Dorsolateral prefrontal cortex (tissue), 120 donors: ENCODE measurements at regions of chr9 and their contacts with region 1.

Region 1: GRCh38 chr9:70258692-70259511 is at the start of gene SMC5:
- DNase-seq: peak; percentile 78 to 96 (median 87)
- H3K4me3 ChIP-seq: peak within 1 kb of the TSS; percentile 64 to 99 (median 92)
- H3K27ac ChIP-seq: peak within 1 kb of the TSS; percentile 63 to 97 (median 88)
- H3K27me3 ChIP-seq: no peaks in the 10 kb centered on the region
- CTCF ChIP-seq: peak in 21 of 56 donors; percentile 8 to 51 (median 28)
- total RNA-seq, gene SMC5: 12.0 to 37.3 (median 21.9) TPM

Region 2: DNA sequence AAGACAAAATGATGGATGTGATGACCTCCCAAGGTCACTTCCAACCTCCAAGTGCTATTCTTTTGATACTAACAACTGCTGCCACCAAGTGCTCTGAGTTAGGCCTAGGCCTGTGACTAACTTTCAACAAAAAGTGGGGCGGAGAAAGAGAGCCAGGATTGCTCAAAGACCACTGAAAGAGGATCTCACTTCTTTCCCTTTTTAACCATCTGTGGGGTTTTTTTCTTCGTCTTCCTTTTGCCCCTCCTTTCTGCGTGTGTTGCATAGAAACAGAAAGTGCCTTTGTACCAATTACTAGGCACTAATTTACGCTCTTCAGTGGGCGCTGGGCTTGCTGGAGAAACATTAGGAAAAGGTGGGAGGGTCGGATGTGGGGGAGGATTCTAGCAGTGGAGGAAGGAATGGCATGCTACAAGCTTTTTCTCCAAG is 147.5 kb after region 1 on chr9:
- intact Hi-C with region 1: loop called (anchors 5 to 10 kb)
- DNase-seq: no peak
- H3K4me3 ChIP-seq: peak overlapping the region in 41 of 59 donors; percentile 2 to 58 (median 28)
- H3K27ac ChIP-seq: peak overlapping the region in 58 of 59 donors; percentile 5 to 89 (median 70)
- H3K27me3 ChIP-seq: no peaks in the 10 kb centered on the region
- CTCF ChIP-seq: peak in 4 of 56 donors; percentile 6 to 16 (median 14)

Region 3: DNA sequence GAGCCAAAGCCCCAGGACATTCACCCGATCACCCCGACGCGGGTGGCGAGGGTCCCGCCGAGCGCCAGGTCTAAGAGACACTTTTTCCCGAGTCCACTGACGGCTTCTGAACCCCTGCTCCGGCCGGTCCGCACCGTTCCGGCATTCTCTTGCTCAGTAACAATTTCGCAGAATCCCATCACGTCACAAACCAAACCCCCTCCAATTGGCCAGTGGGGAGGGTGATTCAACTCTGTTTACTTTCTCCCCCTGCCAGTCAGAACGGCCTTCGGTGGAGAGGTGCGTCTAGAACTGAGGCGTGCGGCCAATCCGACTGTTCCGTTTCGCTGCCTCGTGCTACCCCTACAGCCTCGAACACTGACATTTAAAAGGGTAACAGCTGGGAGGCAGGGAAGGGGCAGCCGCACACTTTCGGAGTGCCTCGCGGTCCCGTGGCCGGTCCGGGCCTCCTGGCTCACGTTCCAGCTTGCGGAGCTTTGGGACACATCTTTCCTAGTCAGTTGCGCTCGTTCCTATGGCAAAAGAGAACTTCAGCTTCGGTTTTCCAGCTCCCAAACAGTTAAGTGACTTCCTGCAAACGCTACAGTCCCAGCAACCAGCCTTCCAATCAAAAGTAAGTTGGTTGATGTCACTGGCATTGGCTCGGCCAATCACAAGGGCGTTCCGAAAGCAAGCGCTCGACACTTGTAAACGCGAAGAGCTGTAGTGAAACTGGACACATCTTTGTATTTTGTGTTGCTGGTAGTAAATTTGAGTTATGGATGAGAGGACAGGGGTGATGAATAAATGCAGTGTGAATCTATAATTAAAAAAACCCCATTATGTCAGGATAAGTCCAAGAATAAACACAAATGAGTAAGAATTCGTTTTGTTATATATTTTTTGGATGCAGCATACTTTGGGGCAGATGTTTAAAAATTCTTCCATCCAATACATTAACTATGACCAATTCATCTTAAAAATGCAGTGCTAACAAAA is 155.2 kb after region 1 on chr9 and contains the start of gene KLF9:
- intact Hi-C with region 1: loop called (anchors 5 to 10 kb)
- DNase-seq: peak; percentile 82 to 97 (median 94)
- H3K4me3 ChIP-seq: peak within 1 kb of the TSS; percentile 63 to 99 (median 93)
- H3K27ac ChIP-seq: peak within 1 kb of the TSS; percentile 72 to 100 (median 99)
- H3K27me3 ChIP-seq: no peaks in the 10 kb centered on the region
- CTCF ChIP-seq: peak in 8 of 56 donors; percentile 4 to 16 (median 10)
- total RNA-seq, gene KLF9: 38.3 to 97.2 (median 59.3) TPM

Region 4: GRCh38 chr9:70451765-70452164 is 192.9 kb after region 1 on chr9:
- intact Hi-C with region 1: no loop called
- DNase-seq: no peak
- H3K4me3 ChIP-seq: no peak overlapping the region
- H3K27ac ChIP-seq: no peak overlapping the region
- H3K27me3 ChIP-seq: no peaks in the 10 kb centered on the region
- CTCF ChIP-seq: no peak

Region 5: DNA sequence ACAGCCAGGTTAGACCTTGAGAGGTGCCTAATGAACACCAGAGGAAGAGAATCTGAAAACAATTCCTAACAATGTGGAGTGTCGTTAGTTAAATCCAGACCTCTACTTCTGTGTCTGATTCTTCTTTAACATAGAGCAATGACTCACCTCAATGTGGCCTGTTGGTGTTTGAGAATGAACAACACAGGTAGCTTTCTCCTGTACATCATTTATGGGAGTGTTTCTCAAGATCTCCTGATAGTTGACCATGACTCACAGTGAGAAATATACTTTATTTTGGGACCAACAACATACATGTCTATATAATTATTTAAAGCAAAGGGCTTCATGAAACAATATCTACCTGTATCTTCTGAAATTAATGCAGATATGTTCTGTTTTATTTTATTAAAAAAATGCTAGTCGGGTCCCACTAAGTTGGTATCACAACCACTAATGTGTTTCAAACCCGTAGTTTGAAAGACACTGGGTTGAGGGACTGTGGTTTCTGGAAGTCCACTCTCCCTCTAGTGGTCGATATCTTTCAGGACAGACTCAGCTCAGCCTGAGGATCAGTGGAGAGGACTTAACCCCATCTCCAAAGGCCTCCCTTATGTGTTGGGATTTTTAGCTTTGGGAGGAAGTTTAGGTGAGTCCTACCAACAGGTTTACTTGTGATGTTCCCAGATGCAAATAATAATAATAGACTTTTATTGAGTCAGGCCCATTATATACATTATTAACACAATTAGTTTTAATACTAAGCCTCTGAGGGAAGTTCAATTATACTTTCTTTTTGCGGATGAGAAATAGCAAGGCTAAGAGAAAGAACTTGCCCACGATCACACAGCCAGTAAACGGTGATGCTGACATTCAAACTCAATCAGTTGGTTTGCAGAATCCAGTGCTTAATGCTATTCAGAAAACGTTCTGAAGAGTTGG is 225.6 kb after region 1 on chr9:
- intact Hi-C with region 1: loop called in 1 of 2 experiments (anchors 10 kb)
- DNase-seq: peak in 2 of 10 donors; percentile 41 to 52
- H3K4me3 ChIP-seq: no peak overlapping the region
- H3K27ac ChIP-seq: peak overlapping the region in 46 of 59 donors; percentile 14 to 98 (median 58)
- H3K27me3 ChIP-seq: no peaks in the 10 kb centered on the region
- CTCF ChIP-seq: peak; percentile 59 to 91 (median 84)